ENCODE measurements at regions of chr15 and their contacts with region 1.

Region 1: DNA sequence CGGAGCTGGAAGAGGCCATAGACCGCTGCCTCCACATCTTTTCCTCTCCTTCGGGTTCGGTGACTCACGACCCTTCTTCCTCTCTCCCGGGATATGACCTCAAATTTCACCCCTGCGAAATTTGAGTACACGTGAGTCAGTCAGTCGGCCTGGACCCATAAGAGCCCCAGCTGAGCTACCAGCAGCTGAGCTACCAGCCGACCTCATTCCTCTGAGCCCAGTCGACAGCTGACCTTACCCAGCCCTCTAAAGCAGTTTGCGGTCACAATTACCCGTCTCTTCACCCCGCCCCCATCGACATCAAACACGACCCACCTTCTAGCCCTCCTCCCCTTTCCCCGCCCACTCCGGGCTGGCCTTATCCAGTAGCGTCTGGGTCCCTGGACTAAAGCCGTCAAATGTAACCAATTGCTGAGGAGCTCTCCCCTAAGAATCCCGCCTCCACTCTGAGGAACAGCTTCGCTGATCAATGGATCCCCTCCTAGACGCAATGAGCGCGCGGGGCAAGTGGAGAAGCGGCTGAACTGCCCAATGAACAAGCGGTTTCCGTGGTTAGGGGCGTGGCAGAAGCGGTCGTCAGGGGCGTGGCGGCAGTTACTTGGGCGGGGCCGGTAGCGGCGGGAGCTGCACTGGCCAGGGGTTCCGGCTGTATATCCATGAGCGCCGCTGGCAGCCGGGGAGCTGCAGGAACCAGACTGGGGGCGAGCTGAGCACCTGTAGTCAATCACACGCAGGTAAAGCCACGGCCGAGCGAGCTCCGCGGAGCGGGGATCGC is at the start of gene ABHD2:
- DNase-seq: peak; percentile 100
- H3K4me3 Mint-ChIP-seq: no peak within 1 kb of the TSS
- H3K27ac Mint-ChIP-seq: peak within 1 kb of the TSS; percentile 97
- H3K4me1 Mint-ChIP-seq: peaks cover 22% of the 10 kb centered on the region
- H3K27me3 Mint-ChIP-seq: no peaks in the 10 kb centered on the region
- CTCF ChIP-seq: no peak
- total RNA-seq, gene ABHD2: 47.7 and 55.9 TPM in 2 replicates

Region 2: DNA sequence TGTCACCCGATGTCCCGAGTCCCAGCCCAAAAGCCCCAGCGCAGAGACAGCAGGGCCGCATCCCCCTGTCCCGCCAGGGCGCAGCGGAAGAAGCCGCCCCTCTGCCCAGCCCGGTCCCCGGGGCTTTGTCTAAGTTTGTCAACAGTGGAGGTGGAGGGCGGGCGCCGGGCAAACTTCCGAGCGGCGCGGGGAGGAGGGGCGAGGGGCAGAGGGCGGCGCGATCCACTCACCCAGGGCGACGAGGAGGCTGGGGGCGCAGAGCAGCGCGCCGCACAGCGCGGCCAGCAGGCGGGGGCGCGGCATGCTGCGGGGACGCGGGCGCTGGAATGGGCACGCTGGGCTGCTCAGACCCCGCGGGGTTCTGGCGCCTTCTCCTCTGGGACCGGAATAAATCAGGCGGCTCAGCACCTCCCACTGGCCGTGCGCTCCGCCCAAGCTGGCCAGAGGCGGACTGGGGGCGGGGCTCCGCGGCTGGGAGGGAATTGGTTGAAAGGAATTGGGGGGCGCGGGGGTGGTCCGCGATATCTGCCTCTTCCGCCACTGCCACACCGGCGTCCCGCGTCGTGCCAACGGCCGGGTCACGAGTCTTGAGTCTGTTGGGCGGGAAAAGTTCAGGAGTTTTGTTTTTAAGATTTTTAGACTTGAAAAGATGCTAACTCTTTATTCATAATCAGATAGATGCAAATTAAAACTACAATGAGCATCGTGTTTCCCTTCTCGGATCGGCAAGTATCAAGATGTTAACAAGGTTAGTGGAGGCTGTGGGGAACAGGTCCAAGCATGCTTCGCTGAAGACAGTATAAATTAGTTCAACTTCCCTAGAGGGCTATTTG is 174.8 kb before region 1 on chr15 and contains the start of gene MFGE8:
- CTCF ChIA-PET with region 1: no interaction called
- POLR2A ChIA-PET with region 1: interaction called, 15 read pairs
- intact Hi-C with region 1: no loop called
- DNase-seq: peak; percentile 80
- H3K4me3 Mint-ChIP-seq: peak within 1 kb of the TSS; percentile 95
- H3K27ac Mint-ChIP-seq: peak within 1 kb of the TSS; percentile 89
- H3K4me1 Mint-ChIP-seq: peaks cover 33% of the 10 kb centered on the region
- H3K27me3 Mint-ChIP-seq: no peaks in the 10 kb centered on the region
- CTCF ChIP-seq: no peak
- total RNA-seq, gene MFGE8: 207 and 254 TPM in 2 replicates

Region 3: GRCh38 chr15:89101302-89102191 is 13.5 kb after region 1 on chr15:
- CTCF ChIA-PET with region 1: interaction called, 11 read pairs
- POLR2A ChIA-PET with region 1: interaction called, 229 read pairs
- intact Hi-C with region 1: loop called (anchors 1 kb)
- DNase-seq: peak; percentile 94
- H3K4me3 Mint-ChIP-seq: peak overlapping the region; percentile 23
- H3K27ac Mint-ChIP-seq: peak overlapping the region; percentile 98
- H3K4me1 Mint-ChIP-seq: peaks cover 48% of the 10 kb centered on the region
- H3K27me3 Mint-ChIP-seq: no peaks in the 10 kb centered on the region
- CTCF ChIP-seq: no peak

Region 4: DNA sequence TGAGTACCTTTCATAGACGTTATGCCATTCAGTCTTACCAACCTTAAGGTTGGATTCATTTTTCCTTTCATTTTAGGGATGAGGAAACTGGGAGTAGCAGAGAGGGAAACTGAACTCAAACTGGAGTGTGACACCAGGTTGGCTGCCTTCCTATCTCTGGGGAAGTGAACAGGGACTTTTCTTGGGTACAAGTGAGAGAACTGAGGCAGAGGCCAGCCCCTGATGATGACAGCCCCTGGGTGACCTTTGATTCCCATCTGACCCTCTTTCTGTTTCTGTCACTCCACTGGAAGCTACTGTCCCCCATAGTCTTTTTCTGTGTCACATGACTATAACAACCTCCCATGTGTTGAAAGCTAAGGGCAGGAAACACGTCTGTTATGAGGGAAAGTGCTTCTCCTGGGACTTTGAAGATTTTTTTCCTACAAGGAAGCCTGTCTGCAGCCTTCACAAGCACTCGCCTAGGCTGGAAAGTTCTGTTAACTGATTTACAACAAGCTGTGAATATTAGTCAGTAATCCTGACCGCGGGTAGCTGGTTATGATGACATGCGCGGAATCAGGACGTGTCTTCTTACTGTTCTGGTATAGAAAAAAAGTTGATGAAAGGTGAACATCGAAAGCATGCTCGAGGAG is 31.6 kb after region 1 on chr15:
- CTCF ChIA-PET with region 1: interaction called, 10 read pairs
- POLR2A ChIA-PET with region 1: interaction called, 121 read pairs
- intact Hi-C with region 1: no loop called
- DNase-seq: peak; percentile 66
- H3K4me3 Mint-ChIP-seq: no peak overlapping the region
- H3K27ac Mint-ChIP-seq: peak overlapping the region; percentile 91
- H3K4me1 Mint-ChIP-seq: peaks cover 47% of the 10 kb centered on the region
- H3K27me3 Mint-ChIP-seq: no peaks in the 10 kb centered on the region
- CTCF ChIP-seq: no peak

Region 5: GRCh38 chr15:89171136-89172072 is 83.4 kb after region 1 on chr15:
- CTCF ChIA-PET with region 1: interaction called, 24 read pairs
- POLR2A ChIA-PET with region 1: interaction called, 10 read pairs
- intact Hi-C with region 1: no loop called
- DNase-seq: peak; percentile 70
- H3K4me3 Mint-ChIP-seq: no peak overlapping the region
- H3K27ac Mint-ChIP-seq: no peak overlapping the region
- H3K4me1 Mint-ChIP-seq: peaks cover 19% of the 10 kb centered on the region
- H3K27me3 Mint-ChIP-seq: no peaks in the 10 kb centered on the region
- CTCF ChIP-seq: peak; percentile 65